ENCODE measurements at regions of chr11 and their contacts with region 1.

Region 1: DNA sequence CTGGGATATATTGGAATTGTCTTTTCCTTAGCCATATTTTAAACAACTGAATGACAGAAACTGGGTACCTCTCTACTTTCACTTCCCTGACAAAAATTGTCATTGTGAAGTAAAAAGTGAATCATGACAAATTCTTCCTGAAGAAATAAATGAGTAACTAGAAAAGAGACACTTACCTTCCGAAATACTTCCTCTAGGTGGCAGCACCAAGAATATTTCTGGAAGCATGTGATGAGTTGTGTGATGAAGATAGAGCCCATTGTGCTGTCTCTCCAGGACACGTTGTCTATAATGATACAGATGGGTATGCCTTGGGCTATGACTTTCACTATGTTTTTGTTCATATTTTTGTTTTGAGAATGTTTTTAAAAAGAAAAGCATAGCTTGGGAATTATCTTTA is 21.5 kb downstream of the CASP4 start:
- DNase-seq: peak; percentile 68
- ATAC-seq: peak; percentile 58
- H3K4me3 ChIP-seq: no peak overlapping the region
- H3K4me3 Mint-ChIP-seq: no peak overlapping the region
- H3K27ac ChIP-seq: no peak overlapping the region
- H3K27ac Mint-ChIP-seq: no peak overlapping the region
- H3K4me1 ChIP-seq: peaks cover 4 to 5% of the 10 kb centered on the region in 2 donors
- H3K4me1 Mint-ChIP-seq: peaks cover 11% of the 10 kb centered on the region
- H3K27me3 ChIP-seq: no peaks in the 10 kb centered on the region
- H3K27me3 Mint-ChIP-seq: no peaks in the 10 kb centered on the region
- CTCF ChIP-seq: peak; percentile 75

Region 2: DNA sequence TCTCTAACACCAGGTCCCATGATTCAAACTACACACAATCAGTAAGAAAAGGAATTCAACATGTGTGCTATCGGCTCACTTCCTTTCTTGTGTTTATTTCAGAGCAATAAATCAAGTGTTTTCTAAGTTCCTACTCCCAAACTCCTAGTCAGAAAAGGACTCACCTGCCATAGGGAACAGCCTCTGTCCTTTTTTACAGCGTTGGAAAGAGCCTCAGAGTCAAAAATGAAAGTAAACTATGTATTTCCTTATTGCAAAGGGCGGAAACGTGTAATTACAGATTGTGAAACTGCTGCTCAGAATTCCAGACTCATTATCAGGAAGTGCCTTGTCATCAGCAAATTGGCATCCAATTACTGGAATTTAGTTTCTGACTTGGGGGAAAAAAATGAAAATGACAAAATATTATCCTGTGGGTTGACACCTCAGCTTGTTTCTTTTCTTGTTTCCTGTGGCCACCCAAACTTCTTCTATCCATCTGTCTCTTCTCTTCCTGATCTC is 21.5 kb after region 1 on chr11 and contains the start of gene CASP4:
- CTCF ChIA-PET with region 1: interaction called, 9 read pairs
- POLR2A ChIA-PET with region 1: no interaction called
- intact Hi-C with region 1: loop called (anchors 1 kb)
- DNase-seq: peak; percentile 72
- ATAC-seq: peak; percentile 75
- H3K4me3 ChIP-seq: peak within 1 kb of the TSS; percentile 66 to 99 (median 85)
- H3K4me3 Mint-ChIP-seq: peak within 1 kb of the TSS; percentile 94
- H3K27ac ChIP-seq: peak within 1 kb of the TSS; percentile 85 to 97
- H3K27ac Mint-ChIP-seq: peak within 1 kb of the TSS; percentile 92
- H3K4me1 ChIP-seq: peaks cover 30 to 32% of the 10 kb centered on the region in 2 donors
- H3K4me1 Mint-ChIP-seq: peaks cover 39% of the 10 kb centered on the region
- H3K27me3 ChIP-seq: no peaks in the 10 kb centered on the region
- H3K27me3 Mint-ChIP-seq: no peaks in the 10 kb centered on the region
- CTCF ChIP-seq: no peak
- total RNA-seq, gene CASP4: 72.4 and 82.8 TPM in 2 replicates

Region 3: DNA sequence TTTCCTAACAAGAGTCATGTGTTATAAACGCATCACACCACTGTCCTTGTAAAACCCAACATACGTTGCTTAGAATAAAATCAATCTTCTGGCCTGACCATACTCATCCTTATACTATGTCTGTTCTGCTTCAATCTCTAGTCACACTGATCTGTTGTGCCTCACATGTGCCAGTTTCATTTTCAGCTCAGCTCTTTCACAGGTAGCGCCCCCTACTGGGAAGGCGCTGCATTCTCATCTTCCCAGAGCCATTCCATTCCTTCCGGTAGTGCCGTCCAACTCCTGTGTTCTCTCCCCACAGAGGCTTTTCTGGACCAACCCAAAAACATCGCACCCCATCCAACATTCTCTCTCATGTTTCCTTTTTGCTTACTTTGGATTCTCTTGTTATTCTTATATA is 53.9 kb after region 1 on chr11:
- CTCF ChIA-PET with region 1: interaction called, 4 read pairs
- POLR2A ChIA-PET with region 1: no interaction called
- intact Hi-C with region 1: loop called (anchors 2 kb)
- DNase-seq: peak; percentile 66
- ATAC-seq: peak; percentile 60
- H3K4me3 ChIP-seq: no peak overlapping the region
- H3K4me3 Mint-ChIP-seq: no peak overlapping the region
- H3K27ac ChIP-seq: no peak overlapping the region
- H3K27ac Mint-ChIP-seq: no peak overlapping the region
- H3K4me1 ChIP-seq: no peaks in the 10 kb centered on the region
- H3K4me1 Mint-ChIP-seq: peaks cover 5% of the 10 kb centered on the region
- H3K27me3 ChIP-seq: no peaks in the 10 kb centered on the region
- H3K27me3 Mint-ChIP-seq: no peaks in the 10 kb centered on the region
- CTCF ChIP-seq: peak; percentile 72

Region 4: DNA sequence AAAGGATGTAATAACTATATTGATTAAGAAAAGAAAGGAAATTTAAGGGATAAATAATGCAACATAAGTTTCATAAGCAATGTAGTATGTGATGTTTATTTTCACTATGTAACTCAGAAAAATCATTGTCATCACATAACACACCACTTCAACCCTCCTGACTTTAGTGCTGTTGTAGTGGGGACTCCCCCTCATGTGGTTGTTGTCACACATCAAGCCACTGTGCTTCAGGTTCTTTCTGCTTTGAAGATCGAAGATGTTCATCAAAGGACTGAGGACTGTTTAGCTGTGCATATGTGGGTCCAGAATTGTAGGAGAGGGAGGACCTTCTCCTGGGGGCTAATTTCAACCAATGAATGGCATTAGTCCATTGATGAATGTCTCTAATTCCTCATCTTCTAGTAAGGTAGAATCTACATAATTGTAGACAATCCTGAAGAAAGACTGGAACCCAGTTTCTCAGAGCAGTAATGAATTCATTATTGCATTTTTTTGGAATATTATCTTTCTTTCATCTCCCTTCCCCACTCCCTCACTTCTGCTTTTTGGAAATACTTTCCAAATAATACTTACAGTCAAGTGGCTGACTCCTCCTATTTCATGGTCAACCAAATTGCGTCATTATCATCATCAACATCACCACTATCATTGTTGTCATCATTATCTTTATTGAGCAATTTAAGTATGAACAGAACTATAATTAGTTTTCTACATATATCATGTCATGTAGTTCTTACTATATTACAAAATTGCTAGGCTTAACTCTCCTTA is 108.0 kb after region 1 on chr11:
- CTCF ChIA-PET with region 1: no interaction called
- POLR2A ChIA-PET with region 1: no interaction called
- intact Hi-C with region 1: no loop called
- DNase-seq: no peak
- ATAC-seq: no peak
- H3K4me3 ChIP-seq: no peak overlapping the region
- H3K4me3 Mint-ChIP-seq: no peak overlapping the region
- H3K27ac ChIP-seq: no peak overlapping the region
- H3K27ac Mint-ChIP-seq: no peak overlapping the region
- H3K4me1 ChIP-seq: no peaks in the 10 kb centered on the region
- H3K4me1 Mint-ChIP-seq: no peaks in the 10 kb centered on the region
- H3K27me3 ChIP-seq: no peaks in the 10 kb centered on the region
- H3K27me3 Mint-ChIP-seq: peaks cover 5% of the 10 kb centered on the region
- CTCF ChIP-seq: no peak

Measured in B cell (primary cell).